ENCODE measurements at regions of chr19 and their contacts with region 1.

Region 1: DNA sequence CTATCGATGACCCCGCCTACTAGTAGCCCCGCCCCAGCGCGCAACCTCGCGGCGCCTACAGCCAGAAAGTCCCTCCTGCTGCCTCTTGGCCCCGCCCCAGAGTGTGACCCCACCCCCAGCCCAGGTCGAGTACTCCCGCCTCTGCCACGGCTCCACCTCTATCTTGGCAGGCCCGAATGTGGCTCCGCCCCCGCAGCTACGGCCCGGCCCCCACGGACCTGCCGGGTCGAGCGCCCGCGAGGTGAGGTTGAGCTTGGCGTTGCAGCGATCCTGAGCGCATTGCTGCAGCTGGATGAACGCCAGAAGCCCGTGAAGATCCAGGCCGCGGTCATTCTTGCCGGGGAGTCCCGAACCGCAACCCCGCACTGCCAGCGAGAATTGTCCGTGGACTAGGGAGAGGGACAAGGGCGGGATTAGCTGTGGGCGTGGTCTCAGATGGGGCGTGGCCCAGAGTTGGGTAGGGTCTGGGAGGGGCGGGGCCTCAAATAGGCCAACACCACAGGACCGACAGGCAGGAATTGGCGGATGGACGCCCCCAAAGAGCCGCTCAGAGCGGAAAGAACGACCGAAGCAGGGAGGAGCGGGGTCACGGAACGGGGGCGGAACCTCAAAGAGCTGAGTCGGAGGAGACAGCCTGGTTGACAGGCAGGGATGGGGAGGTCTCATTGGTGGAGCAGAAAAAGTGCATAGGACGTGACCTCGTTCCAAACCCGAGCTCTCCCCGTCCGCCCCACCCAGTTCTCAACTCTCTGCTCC is 1.8 kb downstream of the LYPD3 start:
- DNase-seq: peak; percentile 100
- H3K4me3 Mint-ChIP-seq: peak overlapping the region; percentile 94
- H3K27ac Mint-ChIP-seq: peak overlapping the region; percentile 86
- H3K4me1 Mint-ChIP-seq: peaks cover 37% of the 10 kb centered on the region
- H3K27me3 Mint-ChIP-seq: no peaks in the 10 kb centered on the region

Region 2: DNA sequence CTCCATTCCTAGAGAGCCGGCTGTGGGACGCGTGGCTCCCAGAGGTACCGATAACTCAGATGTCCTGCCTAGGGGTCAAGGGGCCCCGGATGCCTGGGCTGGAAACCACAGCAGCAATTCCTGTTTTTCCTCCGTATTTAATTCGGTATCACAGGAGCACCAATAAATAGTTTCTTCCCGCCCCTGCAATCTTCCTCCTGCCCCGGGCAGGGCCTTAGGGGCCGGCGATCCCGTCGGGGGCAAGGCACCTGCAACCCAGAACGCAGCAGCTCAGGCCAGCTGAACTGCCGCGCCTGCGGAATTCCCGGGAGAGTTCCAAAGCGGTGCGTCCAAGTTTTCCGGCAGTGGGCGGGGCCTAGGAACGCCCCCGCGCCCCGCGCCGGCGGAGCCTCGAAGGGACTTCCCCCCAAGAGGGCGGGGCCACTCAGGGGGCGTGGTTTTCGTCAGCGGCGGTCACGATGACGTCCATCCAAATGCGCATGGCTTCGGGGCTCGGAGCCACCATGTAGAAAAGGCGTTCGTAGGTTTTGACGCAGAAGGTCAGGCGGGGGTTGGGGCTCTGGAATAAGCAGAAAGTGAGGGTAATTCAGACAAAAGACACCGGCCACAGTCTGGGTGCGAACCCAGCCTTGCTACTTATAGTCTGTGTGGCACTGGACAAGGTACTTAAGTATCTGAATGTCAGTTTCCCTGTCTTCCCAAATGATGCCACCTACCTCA is 11.6 kb after region 1 on chr19:
- CTCF ChIA-PET with region 1: interaction called, 3 read pairs
- intact Hi-C with region 1: loop called (anchors 1 kb)
- DNase-seq: peak; percentile 97
- H3K4me3 Mint-ChIP-seq: peak overlapping the region; percentile 75
- H3K27ac Mint-ChIP-seq: peak overlapping the region; percentile 86
- H3K4me1 Mint-ChIP-seq: peaks cover 46% of the 10 kb centered on the region
- H3K27me3 Mint-ChIP-seq: no peaks in the 10 kb centered on the region

Region 3: DNA sequence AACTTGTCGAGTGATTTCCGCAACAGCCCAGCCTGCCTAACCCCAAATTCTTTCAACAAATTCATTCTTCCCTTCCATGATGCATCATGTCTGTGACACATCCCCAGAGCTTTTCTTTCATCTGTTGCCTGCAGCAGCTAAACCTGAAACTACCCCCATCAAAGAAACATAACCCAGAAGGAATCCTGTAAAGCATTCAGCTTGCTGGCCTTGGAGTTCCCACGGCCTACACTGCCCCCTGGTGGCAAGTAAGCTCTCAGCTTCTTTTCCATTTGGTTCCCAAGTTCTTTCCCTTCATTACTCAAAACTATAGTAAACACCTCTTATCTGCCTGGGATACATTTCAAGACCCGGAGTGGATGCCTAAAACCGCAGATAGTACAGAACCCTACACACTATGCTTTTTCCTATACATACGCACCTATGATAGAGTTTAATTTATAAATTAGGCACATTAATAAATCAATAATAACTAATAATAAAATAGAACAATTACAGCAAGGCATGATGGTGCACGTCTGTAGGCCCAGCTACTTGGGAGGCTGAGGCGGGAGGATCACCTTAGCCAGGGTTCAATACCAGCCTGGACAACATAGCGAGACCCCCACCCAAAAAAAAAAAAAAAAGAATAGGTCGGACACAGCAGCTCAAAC is 56.0 kb after region 1 on chr19:
- CTCF ChIA-PET with region 1: interaction called, 18 read pairs
- intact Hi-C with region 1: loop called (anchors 2 kb)
- DNase-seq: peak; percentile 89
- H3K4me3 Mint-ChIP-seq: no peak overlapping the region
- H3K27ac Mint-ChIP-seq: peak overlapping the region; percentile 48
- H3K4me1 Mint-ChIP-seq: peaks cover 12% of the 10 kb centered on the region
- H3K27me3 Mint-ChIP-seq: no peaks in the 10 kb centered on the region

Region 4: GRCh38 chr19:43526884-43527859 is 63.6 kb after region 1 on chr19 and contains the start of gene ETHE1:
- CTCF ChIA-PET with region 1: interaction called, 5 read pairs
- intact Hi-C with region 1: loop called (anchors 2 kb)
- DNase-seq: peak; percentile 73
- H3K4me3 Mint-ChIP-seq: peak within 1 kb of the TSS; percentile 97
- H3K27ac Mint-ChIP-seq: peak within 1 kb of the TSS; percentile 96
- H3K4me1 Mint-ChIP-seq: peaks cover 22% of the 10 kb centered on the region
- H3K27me3 Mint-ChIP-seq: no peaks in the 10 kb centered on the region
- total RNA-seq, gene ETHE1: 62.1 to 64.4 TPM

Region 5: DNA sequence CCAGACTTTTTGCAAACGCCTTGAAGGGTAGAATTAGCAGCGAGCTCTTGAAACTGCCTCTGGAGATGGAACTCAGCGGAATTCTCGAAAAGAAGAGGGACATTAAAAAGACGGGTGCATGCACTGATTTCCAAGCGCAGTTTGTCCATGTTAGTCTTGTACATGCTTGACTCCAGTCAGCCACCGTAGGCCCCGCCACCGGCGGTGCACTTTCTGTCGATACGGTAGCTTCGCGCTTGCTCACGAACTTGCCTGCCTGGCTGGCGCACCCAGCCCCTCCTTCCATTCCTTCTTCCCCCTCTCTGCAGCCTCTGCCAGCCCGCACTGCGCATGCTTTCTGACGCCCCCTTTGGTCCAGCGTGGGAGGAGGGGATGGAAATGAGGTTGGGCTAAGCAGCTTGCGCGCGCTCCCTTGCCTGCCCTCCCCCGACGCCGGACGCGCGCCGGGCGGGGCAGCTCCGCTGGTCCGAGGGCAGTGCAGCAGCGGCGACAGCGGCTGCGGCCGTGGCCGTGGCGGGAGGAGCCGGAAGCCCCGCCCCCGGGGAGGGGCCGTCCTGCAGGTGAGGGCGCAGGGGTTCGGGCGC is 69.5 kb after region 1 on chr19 and contains the start of gene ZNF575:
- CTCF ChIA-PET with region 1: no interaction called
- intact Hi-C with region 1: loop called (anchors 1 kb)
- DNase-seq: peak; percentile 92
- H3K4me3 Mint-ChIP-seq: peak within 1 kb of the TSS; percentile 80
- H3K27ac Mint-ChIP-seq: peak within 1 kb of the TSS; percentile 88
- H3K4me1 Mint-ChIP-seq: peaks cover 19% of the 10 kb centered on the region
- H3K27me3 Mint-ChIP-seq: no peaks in the 10 kb centered on the region
- total RNA-seq, gene ZNF575: 3.1 to 5.2 TPM

Region 6: GRCh38 chr19:43575156-43575950 is 111.8 kb after region 1 on chr19 and contains the starts of genes PINLYP and XRCC1:
- CTCF ChIA-PET with region 1: no interaction called
- intact Hi-C with region 1: loop called (anchors 1 kb)
- DNase-seq: peak; percentile 99
- H3K4me3 Mint-ChIP-seq: peak within 1 kb of the TSS; percentile 95
- H3K27ac Mint-ChIP-seq: peak within 1 kb of the TSS; percentile 94
- H3K4me1 Mint-ChIP-seq: peaks cover 37% of the 10 kb centered on the region
- H3K27me3 Mint-ChIP-seq: no peaks in the 10 kb centered on the region
- total RNA-seq, gene PINLYP: 3.2 to 3.8 TPM
- total RNA-seq, gene XRCC1: 33.7 to 34.5 TPM

Measured in activated naive CD4-positive, alpha-beta T cell treated with anti-CD3 and anti-CD28 coated beads for 36 hours (primary cell).